IMR-90 (cell line): ENCODE measurements at regions of chr11 and their contacts with region 1.

Region 1: GRCh38 chr11:59680287-59681154 is 11.7 kb upstream of the PATL1 start:
- DNase-seq: peak; percentile 83
- ATAC-seq: peak; percentile 100
- H3K4me3 ChIP-seq: no peak overlapping the region
- H3K27ac ChIP-seq: no peak overlapping the region
- H3K4me1 ChIP-seq: no peaks in the 10 kb centered on the region
- H3K27me3 ChIP-seq: no peaks in the 10 kb centered on the region
- CTCF ChIP-seq: peak; percentile 87
- POLR2A ChIP-seq: no peak
- RAD21 ChIP-seq: peak; percentile 88

Region 2: GRCh38 chr11:59429924-59430516 is 250.5 kb before region 1 on chr11:
- CTCF ChIA-PET with region 1: no interaction called
- POLR2A ChIA-PET with region 1: no interaction called
- dilution Hi-C with region 1: no loop called
- in situ Hi-C with region 1: no loop called
- intact Hi-C with region 1: loop called (anchors 1 kb)
- DNase-seq: peak; percentile 45
- ATAC-seq: peak; percentile 75
- H3K4me3 ChIP-seq: no peak overlapping the region
- H3K27ac ChIP-seq: no peak overlapping the region
- H3K4me1 ChIP-seq: no peaks in the 10 kb centered on the region
- H3K27me3 ChIP-seq: no peaks in the 10 kb centered on the region; the same call in 1 of the 2 replicates
- CTCF ChIP-seq: peak; percentile 74
- POLR2A ChIP-seq: no peak
- RAD21 ChIP-seq: peak; percentile 65

Region 3: DNA sequence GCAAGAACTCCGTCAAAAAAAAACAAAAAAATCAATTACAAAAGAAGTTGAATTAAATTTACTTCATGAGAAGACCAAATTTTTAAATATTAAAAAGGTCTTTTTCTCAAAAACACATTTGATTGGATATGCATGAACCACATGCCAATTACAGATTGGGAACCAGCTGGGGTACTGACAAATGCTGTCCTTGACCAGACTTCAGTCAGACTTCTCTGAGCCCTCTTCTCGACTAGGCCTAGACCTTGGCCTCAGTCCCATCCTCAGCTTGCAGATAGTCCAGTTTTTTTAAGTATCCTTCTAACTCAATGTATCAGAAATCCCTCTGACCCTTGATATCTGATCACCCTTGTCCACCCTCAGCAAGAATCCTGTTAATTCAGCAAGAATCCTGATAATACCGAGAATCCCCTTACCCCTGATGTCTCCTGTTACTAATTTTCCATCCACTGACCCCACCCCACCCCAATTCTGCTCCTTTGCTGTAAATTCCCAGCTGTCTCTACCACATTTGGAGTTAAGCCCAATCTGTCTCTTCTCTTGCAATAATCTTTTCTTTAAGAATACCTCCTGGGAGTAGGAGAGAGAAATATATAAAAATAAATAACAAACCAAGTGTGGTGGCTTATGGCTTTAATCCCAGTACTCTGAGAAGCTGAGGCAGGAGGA is 138.2 kb before region 1 on chr11:
- CTCF ChIA-PET with region 1: interaction called, 9 read pairs
- POLR2A ChIA-PET with region 1: no interaction called
- dilution Hi-C with region 1: no loop called
- in situ Hi-C with region 1: no loop called
- intact Hi-C with region 1: loop called (anchors 1 kb)
- DNase-seq: no peak
- ATAC-seq: no peak
- H3K4me3 ChIP-seq: no peak overlapping the region
- H3K27ac ChIP-seq: no peak overlapping the region
- H3K4me1 ChIP-seq: no peaks in the 10 kb centered on the region
- H3K27me3 ChIP-seq: no peaks in the 10 kb centered on the region
- CTCF ChIP-seq: no peak
- POLR2A ChIP-seq: no peak
- RAD21 ChIP-seq: no peak